CD14-positive monocyte (primary cell): ENCODE measurements at regions of chr4 and their contacts with region 1.

Region 1: DNA sequence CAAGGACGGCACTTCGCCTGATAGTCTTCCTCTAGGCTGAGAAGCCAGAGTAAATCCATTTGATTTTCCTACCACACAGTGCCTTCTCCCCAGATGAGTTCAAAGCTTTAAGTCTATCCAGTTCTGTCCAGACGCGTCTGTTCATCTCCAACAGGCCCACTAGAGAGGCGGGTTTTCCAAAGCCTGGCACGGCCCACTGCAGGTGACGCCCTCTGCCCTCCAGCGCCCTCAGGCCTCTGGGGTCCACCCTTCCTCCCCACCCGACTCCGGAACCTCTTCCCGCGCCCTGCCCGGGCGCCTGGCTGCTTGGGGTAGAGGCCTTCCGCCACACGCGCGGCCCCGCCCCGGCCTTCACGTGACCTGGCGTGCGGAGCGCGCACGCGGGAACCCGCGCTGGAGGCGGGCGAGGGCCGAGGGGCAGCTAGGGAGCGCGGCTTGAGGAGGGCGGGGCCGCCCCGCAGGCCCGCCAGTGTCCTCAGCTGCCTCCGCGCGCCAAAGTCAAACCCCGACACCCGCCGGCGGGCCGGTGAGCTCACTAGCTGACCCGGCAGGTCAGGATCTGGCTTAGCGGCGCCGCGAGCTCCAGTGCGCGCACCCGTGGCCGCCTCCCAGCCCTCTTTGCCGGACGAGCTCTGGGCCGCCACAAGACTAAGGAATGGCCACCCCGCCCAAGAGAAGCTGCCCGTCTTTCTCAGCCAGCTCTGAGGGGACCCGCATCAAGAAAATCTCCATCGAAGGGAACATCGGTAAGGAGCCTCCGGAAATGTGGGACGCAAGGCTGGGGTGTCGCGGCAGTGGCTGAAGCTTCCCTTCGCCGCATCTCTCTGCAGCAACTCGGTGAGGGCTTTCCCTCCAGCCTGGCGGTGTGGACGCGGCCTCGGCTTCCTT is at the start of gene DCK:
- DNase-seq: peak; percentile 81 to 86 (median 81)
- H3K4me3 ChIP-seq: peak within 1 kb of the TSS; percentile 68 to 99 (median 92)
- H3K4me3 Mint-ChIP-seq: peak within 1 kb of the TSS; percentile 92 to 95
- H3K27ac ChIP-seq: peak within 1 kb of the TSS; percentile 76 to 92
- H3K27ac Mint-ChIP-seq: peak within 1 kb of the TSS; percentile 84 to 96 (median 88)
- H3K4me1 ChIP-seq: peaks cover 49 to 51% of the 10 kb centered on the region in 2 donors
- H3K4me1 Mint-ChIP-seq: peaks cover 48% of the 10 kb centered on the region
- H3K27me3 ChIP-seq: no peaks in the 10 kb centered on the region
- H3K27me3 Mint-ChIP-seq: no peaks in the 10 kb centered on the region
- CTCF ChIP-seq: no peak
- polyA plus RNA-seq, gene DCK: 13.3 to 56.6 (median 47.3) TPM

Region 2: DNA sequence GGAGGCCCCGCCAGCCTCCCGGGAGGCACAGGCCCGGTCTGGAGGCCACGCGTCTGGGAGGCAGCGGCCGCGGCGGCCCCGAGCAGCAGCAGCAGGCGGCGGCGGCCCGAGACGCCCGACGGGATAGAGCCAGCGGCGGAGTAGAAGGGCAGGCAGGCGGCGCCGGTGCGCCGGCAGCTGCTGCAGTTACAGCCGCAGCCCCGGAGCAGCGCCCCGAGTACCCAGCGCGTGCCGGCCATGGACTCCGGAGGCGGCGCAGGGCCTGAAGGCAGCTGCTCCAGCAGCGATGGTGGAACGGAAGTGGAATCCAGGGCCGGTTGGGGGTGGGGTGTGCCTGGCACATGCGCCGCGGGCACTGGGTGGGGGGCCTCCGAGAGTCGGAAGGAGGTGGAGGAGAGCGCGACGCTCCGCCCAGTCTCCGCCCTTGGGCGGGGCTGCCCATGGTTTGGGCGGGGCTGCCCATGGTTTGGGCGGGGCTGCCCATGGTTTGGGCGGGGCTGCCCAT is 153.8 kb before region 1 on chr4 and contains the start of gene GRSF1:
- intact Hi-C with region 1: loop called in 1 of 2 experiments (anchors 5 kb)
- DNase-seq: peak; percentile 80 to 91 (median 91)
- H3K4me3 ChIP-seq: peak within 1 kb of the TSS; percentile 62 to 79 (median 72)
- H3K4me3 Mint-ChIP-seq: peak within 1 kb of the TSS; percentile 95 to 96
- H3K27ac ChIP-seq: peak within 1 kb of the TSS; percentile 79 to 90
- H3K27ac Mint-ChIP-seq: peak within 1 kb of the TSS; percentile 92 to 97 (median 95)
- H3K4me1 ChIP-seq: peaks cover 20 to 25% of the 10 kb centered on the region in 2 donors
- H3K4me1 Mint-ChIP-seq: peaks cover 24% of the 10 kb centered on the region
- H3K27me3 ChIP-seq: no peaks in the 10 kb centered on the region
- H3K27me3 Mint-ChIP-seq: peaks cover 0 to 3% (median under 1%) of the 10 kb centered on the region in 3 donors
- CTCF ChIP-seq: no peak
- polyA plus RNA-seq, gene GRSF1: 29.1 to 95.9 (median 93.6) TPM

Region 3: DNA sequence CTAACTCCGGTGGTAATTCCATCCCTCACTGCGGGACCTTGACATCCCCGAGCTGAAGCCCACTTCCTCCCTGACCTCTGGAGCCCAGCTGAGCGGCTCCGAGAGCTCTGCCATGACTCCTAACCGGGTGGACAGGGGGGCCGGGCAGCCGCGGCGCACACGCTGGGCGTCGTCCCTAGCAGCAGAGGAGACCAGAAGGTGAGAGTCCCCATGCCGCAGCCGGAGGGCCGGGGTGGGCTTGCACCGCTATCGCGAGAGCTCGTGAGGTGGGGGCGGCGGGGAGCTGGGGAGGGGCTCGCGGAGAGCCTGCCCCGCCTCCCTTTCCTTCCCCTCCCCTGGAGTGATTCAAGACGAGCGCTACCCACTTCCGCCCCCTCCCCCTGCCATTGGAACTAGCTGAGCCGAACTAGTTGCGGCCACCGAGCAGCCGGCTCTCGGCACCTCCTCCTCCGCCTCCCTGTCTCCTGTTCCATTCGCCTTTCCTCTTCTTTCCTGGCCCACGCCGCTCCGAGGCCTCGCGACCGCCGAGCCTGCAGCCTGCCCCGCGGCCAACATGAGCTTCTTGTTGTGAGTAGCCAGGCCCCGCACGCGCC is 91.3 kb before region 1 on chr4 and contains the start of gene MOB1B:
- intact Hi-C with region 1: loop called in 1 of 2 experiments (anchors 10 kb)
- DNase-seq: peak; percentile 70 to 79 (median 73)
- H3K4me3 ChIP-seq: peak within 1 kb of the TSS; percentile 63 to 98 (median 87)
- H3K4me3 Mint-ChIP-seq: peak within 1 kb of the TSS; percentile 100
- H3K27ac ChIP-seq: peak within 1 kb of the TSS; percentile 53 to 84
- H3K27ac Mint-ChIP-seq: peak within 1 kb of the TSS; percentile 78 to 93 (median 90)
- H3K4me1 ChIP-seq: peaks cover 13 to 26% of the 10 kb centered on the region in 2 donors
- H3K4me1 Mint-ChIP-seq: peaks cover 39% of the 10 kb centered on the region
- H3K27me3 ChIP-seq: no peaks in the 10 kb centered on the region
- H3K27me3 Mint-ChIP-seq: no peaks in the 10 kb centered on the region
- CTCF ChIP-seq: peak; percentile 57
- polyA plus RNA-seq, gene MOB1B: 3.9 to 10.7 (median 7.0) TPM

Region 4: GRCh38 chr4:70943114-70943513 is 50.3 kb before region 1 on chr4:
- intact Hi-C with region 1: loop called (anchors 5 to 10 kb)
- DNase-seq: peak; percentile 33 to 69 (median 41)
- H3K4me3 ChIP-seq: peak overlapping the region in 2 of 3 experiments; percentile 10 to 12
- H3K4me3 Mint-ChIP-seq: no peak overlapping the region
- H3K27ac ChIP-seq: peak overlapping the region in 1 of 2 donors; percentile 65
- H3K27ac Mint-ChIP-seq: peak overlapping the region in 6 of 7 donors; percentile 31 to 71 (median 62)
- H3K4me1 ChIP-seq: peaks cover 55 to 63% of the 10 kb centered on the region in 2 donors
- H3K4me1 Mint-ChIP-seq: peaks cover 52% of the 10 kb centered on the region
- H3K27me3 ChIP-seq: no peaks in the 10 kb centered on the region
- H3K27me3 Mint-ChIP-seq: no peaks in the 10 kb centered on the region
- CTCF ChIP-seq: no peak

Region 5: DNA sequence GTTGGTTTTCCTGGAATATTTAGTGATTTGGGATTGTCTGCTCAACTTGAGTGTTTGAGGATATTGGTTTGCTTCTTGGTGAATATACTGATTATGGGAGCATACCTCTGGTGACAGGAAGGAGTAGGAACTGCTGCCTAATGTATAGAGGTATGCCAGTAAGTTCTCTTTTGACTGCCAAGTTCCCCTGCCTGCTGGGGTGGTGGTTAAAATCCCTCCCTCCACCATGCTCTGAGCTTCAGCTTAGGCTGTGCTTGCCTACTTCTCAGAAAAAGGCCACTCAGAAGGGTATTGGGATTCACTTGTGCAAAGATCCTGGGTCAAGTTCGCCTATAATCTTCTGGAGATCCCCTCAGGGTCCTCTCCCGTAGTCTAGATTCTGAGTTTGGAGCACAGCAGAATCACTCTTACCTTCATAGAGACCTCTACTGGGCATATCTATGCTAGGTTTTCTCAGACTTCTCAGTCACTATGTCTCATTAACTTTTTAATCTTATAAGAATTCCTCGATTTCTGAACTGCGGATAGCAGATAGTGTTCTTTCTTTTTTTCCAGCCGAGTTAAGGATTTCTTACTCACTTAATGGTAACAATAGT is 44.7 kb before region 1 on chr4:
- intact Hi-C with region 1: loop called (anchors 5 to 10 kb)
- DNase-seq: peak in 1 of 3 donors; percentile 11
- H3K4me3 ChIP-seq: peak overlapping the region in 1 of 3 experiments; percentile 49
- H3K4me3 Mint-ChIP-seq: peak overlapping the region; percentile 6 to 65
- H3K27ac ChIP-seq: peak overlapping the region; percentile 34 to 77
- H3K27ac Mint-ChIP-seq: peak overlapping the region; percentile 51 to 93 (median 87)
- H3K4me1 ChIP-seq: peaks cover 75 to 77% of the 10 kb centered on the region in 2 donors
- H3K4me1 Mint-ChIP-seq: peaks cover 74% of the 10 kb centered on the region
- H3K27me3 ChIP-seq: no peaks in the 10 kb centered on the region
- H3K27me3 Mint-ChIP-seq: no peaks in the 10 kb centered on the region
- CTCF ChIP-seq: peak; percentile 8

Region 6: GRCh38 chr4:71163317-71163716 is 169.9 kb after region 1 on chr4:
- intact Hi-C with region 1: no loop called
- DNase-seq: no peak
- H3K4me3 ChIP-seq: no peak overlapping the region
- H3K4me3 Mint-ChIP-seq: no peak overlapping the region
- H3K27ac ChIP-seq: no peak overlapping the region
- H3K27ac Mint-ChIP-seq: no peak overlapping the region
- H3K4me1 ChIP-seq: no peaks in the 10 kb centered on the region
- H3K4me1 Mint-ChIP-seq: no peaks in the 10 kb centered on the region
- H3K27me3 ChIP-seq: no peaks in the 10 kb centered on the region
- H3K27me3 Mint-ChIP-seq: peaks cover 1 to 4% (median 4%) of the 10 kb centered on the region in 3 donors
- CTCF ChIP-seq: no peak